ENCODE measurements at regions of chr7 and their contacts with region 1.

Region 1: GRCh38 chr7:43925984-43926797 is at the start of gene UBE2D4:
- DNase-seq: peak; percentile 78 to 98 (median 90)

Region 2: DNA sequence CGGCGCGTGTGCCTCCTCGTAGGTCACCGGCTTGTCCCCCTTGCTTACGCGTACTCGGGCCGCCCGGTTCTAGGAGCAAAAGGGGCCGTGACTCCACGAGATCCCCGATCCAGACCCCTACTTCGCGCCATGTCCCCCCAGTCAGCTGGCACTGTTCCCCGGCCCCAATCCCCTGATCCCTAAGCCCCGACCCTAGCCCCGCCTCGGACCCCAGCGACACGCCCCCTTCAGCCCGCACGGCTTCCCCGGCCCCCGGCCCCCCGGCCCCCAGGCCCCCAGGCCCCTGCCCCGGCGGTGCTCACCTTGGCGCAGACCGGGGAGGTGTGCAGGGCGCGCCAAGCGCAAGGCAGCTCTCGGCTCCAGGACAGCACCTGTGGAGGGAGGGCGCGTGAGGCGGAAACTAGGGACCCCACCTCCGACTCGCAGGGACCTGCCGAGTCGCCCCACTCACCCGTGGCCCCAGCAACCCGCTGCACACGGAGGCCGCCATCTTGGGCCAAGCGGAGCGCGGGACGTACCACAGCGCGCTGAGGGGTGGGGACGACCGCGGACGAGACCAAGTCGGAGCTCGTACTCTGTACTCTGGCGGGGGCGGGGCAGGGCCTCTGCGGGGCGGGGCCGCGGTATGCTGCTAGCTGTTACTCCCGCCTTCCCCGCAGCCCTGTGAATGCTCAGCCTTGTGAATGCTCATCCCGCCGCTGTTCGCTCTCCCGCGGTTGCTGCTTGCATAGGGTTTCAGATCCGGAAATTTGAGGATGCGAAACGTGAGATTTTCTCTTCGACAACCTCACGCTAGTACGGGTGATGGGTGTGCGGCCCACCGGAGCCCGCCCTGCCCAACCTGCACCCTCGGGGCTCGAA is 57.0 kb before region 1 on chr7 and contains the start of gene MRPS24:
- intact Hi-C with region 1: loop called (anchors 1 kb)
- DNase-seq: peak; percentile 88 to 99 (median 95)

Measured in posterior cingulate gyrus (tissue), 11 donors.